Esophagus squamous epithelium (tissue), 5 donors: ENCODE measurements at regions of chr3 and their contacts with region 1.

Region 1: GRCh38 chr3:112642912-112643506 is 2.1 kb upstream of the CCDC80 start:
- DNase-seq: peak; percentile 30
- H3K4me3 ChIP-seq: peak overlapping the region in 3 of 4 donors; percentile 15 to 44 (median 18)
- H3K27ac ChIP-seq: peak overlapping the region in 2 of 4 donors; percentile 36 to 85
- H3K4me1 ChIP-seq: peaks cover 0 to 52% (median 17%) of the 10 kb centered on the region in 3 donors
- H3K27me3 ChIP-seq: no peaks in the 10 kb centered on the region
- CTCF ChIP-seq: peak; percentile 72 to 90 (median 81)
- POLR2A ChIP-seq: no peak

Region 2: GRCh38 chr3:112814266-112814665 is 171.3 kb after region 1 on chr3:
- intact Hi-C with region 1: loop called (anchors 5 kb)
- DNase-seq: no peak
- H3K4me3 ChIP-seq: no peak overlapping the region
- H3K27ac ChIP-seq: peak overlapping the region in 3 of 4 donors; percentile 53 to 83 (median 76)
- H3K4me1 ChIP-seq: peaks cover 4 to 37% (median 11%) of the 10 kb centered on the region in 3 donors
- H3K27me3 ChIP-seq: no peaks in the 10 kb centered on the region
- CTCF ChIP-seq: peak in 5 of 6 experiments; percentile 36 to 64 (median 43)
- POLR2A ChIP-seq: no peak

Region 3: DNA sequence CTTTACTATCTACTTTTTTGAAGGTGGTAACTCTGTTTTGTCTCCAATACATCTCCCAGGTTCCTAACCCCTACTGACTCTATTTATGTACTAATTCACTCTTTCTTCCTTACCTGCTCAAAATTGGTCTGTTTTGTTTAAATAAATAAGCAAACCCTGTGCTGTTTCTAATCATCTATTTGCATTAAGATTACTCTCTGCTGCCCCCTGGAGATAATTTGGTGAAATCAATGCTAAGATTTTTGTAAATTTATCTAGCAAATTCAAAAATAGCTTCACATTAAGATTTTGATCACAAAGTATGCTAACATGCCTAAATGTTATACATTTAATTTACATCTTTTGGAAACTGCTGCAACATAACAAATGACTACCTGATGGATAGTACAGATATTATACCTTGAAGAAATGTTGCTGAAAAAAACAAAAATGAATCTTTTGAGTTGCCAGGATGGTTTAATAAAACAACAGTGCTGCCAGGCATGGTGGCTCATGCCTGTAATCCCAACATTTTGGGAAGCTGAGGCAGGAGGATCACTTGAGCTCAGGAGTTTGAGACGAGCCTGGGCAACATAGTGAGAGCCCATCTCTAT is 336.3 kb after region 1 on chr3:
- intact Hi-C with region 1: loop called (anchors 10 kb)
- DNase-seq: no peak
- H3K4me3 ChIP-seq: no peak overlapping the region
- H3K27ac ChIP-seq: no peak overlapping the region
- H3K4me1 ChIP-seq: peaks cover 0 to 34% (median 3%) of the 10 kb centered on the region in 3 donors
- H3K27me3 ChIP-seq: no peaks in the 10 kb centered on the region
- CTCF ChIP-seq: peak; percentile 64 to 81 (median 74)
- POLR2A ChIP-seq: no peak